Astrocyte of the cerebellum (primary cell): ENCODE measurements at regions of chr7 and their contacts with region 1.

Region 1: DNA sequence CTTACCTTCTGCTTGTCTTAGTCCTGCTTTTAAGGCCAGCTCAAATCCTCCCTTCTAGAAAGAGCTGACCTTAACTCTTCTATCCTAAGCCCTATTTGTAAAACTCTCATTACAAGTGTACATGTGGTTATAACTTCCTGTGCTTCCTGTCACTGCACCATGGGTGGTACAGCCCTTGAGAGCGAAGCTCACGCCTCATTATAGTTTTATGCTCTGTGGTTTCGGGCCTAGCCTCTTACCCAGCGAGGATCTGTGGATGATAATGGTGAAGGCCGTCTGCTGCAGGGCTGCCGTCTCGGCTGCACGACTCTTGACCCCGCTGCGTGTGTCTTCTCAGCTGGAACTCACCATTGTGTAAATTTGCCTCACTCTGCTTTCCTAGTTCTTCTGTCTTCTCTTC is 74.6 kb downstream of the CUL1 start:
- DNase-seq: peak; percentile 78
- H3K4me3 ChIP-seq: no peak overlapping the region
- CTCF ChIP-seq: no peak

Region 2: GRCh38 chr7:148708026-148708885 is 65.1 kb before region 1 on chr7:
- in situ Hi-C with region 1: loop called (anchors 5 kb)
- DNase-seq: no peak
- H3K4me3 ChIP-seq: no peak overlapping the region
- CTCF ChIP-seq: no peak